H1 (cell line): ENCODE measurements at regions of chr19 and their contacts with region 1.

Region 1: DNA sequence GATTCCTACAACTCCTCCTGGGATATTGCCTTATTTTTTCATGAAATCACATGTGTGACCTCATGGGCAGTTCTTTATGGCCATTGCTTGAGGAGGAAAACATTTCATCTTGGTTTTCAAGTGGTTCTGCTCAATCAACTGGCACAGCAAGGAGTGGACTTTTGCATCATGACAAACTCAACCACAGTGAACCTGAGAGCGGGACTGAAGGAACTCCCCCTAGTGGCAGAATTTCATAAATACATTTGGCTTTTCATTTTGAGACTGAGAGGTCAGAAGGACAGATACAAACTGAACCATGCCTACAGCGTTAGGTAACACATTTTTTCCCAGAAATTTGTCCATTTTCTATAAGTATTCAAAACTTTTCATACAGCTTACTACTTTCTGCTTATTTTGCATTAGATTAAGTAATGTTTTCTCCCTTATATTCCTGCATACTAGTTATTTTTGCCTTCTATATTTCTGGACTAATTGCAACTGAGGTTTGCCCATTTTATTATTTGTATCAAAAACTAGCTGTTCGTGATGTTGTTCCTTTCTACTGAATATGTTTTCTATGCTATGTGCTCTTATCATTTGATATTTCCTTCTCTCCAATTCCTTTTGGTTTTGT is 13.4 kb upstream of the SIGLEC12 start:
- DNase-seq: no peak
- H3K4me3 ChIP-seq: no peak overlapping the region
- H3K27ac ChIP-seq: no peak overlapping the region
- H3K4me1 ChIP-seq: no peaks in the 10 kb centered on the region
- H3K27me3 ChIP-seq: peaks cover 0 to 1% (median 0%) of the 10 kb centered on the region in 4 experiments; a peak in 1 of 7 replicates
- CTCF ChIP-seq: peak; percentile 21 to 74 (median 53); a peak in 3 of 4 replicates
- EP300 ChIP-seq: no peak
- POLR2A ChIP-seq: no peak
- RAD21 ChIP-seq: peak; percentile 41 to 44

Region 2: DNA sequence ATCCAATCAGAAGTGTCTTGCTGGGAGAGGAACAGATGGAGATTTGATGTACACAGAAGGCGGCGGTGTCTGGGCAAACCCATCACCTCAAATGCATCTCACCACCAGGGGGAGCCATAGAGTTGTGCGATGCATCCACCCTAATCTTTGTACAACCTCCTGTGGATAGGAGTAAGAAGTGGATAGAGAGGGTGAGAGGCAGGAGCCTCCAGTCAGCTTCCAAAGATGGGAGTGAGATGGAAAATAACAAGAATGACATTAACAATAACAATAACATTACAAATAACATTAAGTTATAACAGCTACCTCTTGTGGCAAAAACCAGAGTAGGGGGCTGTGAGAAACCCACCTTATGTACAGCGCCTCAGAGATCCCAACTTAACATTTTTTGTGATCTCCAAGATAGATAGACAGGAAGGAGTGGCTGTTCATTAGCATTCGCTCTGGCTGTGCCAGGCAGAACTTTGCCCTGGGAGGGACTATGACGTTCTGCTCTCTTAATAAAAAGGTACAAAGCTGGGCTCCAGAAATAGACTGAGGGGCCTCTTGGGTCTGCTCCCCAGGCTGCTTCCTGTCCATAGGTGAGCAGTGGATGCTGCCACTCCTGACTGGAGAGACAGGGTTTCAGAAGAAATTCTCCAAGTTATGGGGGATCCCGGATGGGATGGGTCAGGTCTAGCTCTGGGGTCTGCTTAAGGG is 41.8 kb before region 1 on chr19:
- CTCF ChIA-PET with region 1: interaction called, 19 read pairs
- POLR2A ChIA-PET with region 1: no interaction called
- DNase-seq: peak; percentile 17 to 86
- H3K4me3 ChIP-seq: no peak overlapping the region
- H3K27ac ChIP-seq: no peak overlapping the region
- H3K4me1 ChIP-seq: no peaks in the 10 kb centered on the region
- H3K27me3 ChIP-seq: no peaks in the 10 kb centered on the region; a peak in 1 of 7 replicates
- CTCF ChIP-seq: peak; percentile 76 to 81 (median 78)
- EP300 ChIP-seq: no peak
- POLR2A ChIP-seq: no peak
- RAD21 ChIP-seq: peak; percentile 78

Region 3: DNA sequence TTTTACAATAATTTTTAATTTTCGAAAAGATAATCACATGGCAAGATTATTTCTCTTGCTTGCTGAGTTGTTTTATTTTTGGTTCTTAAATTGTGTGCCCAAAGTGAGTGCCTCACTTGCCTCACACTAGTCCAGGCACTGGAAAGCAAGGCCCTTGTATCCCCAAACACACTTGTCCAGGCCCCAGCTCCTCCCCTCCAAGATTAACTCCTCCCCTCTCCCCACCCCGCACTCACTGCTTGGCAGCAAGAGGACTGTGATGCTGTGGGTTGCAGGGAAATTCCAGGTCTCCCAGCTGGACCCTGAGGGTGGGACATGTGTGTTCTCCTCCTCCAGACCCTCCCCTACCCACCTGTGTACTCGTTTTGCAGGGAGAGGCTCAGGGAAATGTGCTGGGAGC is 17.3 kb before region 1 on chr19:
- CTCF ChIA-PET with region 1: interaction called, 12 read pairs
- POLR2A ChIA-PET with region 1: no interaction called
- DNase-seq: no peak
- H3K4me3 ChIP-seq: no peak overlapping the region
- H3K27ac ChIP-seq: no peak overlapping the region
- H3K4me1 ChIP-seq: no peaks in the 10 kb centered on the region
- H3K27me3 ChIP-seq: no peaks in the 10 kb centered on the region; a peak in 1 of 7 replicates
- CTCF ChIP-seq: no peak
- EP300 ChIP-seq: no peak
- POLR2A ChIP-seq: no peak
- RAD21 ChIP-seq: no peak

Region 4: DNA sequence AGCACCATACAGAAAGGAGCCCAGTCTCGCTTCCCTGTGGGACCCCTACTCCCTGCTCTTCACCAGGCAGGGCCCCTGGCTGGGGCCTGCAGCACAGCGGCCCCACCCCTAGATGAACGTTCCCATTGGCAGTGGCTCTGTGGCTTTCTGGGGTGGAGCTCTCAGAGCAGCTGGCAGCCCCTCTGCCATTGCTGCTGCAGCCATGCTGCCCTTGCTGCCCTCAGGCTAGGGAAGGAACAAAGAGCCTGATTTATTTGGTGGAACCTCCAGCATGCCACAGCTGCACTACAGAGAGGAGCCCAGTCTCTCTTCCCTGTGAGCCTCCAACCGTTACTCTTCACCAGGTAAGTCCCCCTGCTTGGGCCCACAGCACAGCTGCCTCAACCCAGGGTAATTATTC is 10.7 kb after region 1 on chr19:
- CTCF ChIA-PET with region 1: interaction called, 16 read pairs
- POLR2A ChIA-PET with region 1: no interaction called
- DNase-seq: no peak
- H3K4me3 ChIP-seq: no peak overlapping the region
- H3K27ac ChIP-seq: no peak overlapping the region
- H3K4me1 ChIP-seq: no peaks in the 10 kb centered on the region
- H3K27me3 ChIP-seq: no peaks in the 10 kb centered on the region
- CTCF ChIP-seq: no peak
- EP300 ChIP-seq: no peak
- POLR2A ChIP-seq: no peak
- RAD21 ChIP-seq: no peak

Region 5: DNA sequence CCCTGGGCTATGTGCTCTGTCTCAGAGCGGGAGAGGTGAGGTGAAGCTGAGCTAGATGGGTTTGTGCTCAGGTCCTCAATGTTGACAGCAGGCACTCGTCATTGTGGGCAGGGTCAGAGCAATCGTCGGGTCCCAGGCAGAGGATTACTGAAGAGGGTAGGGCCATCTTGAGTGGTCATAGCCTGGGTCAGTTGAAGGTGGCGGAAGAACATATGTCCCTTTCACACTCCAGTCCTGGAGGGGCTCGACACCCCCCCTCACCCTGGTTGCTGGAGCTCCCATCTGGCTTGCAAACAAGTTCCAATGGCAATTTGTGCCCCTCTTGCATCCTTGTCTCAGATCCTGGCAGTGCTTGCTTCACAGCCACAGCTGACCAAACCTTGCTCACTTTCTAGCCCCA is 23.0 kb after region 1 on chr19:
- CTCF ChIA-PET with region 1: no interaction called
- POLR2A ChIA-PET with region 1: no interaction called
- DNase-seq: no peak
- H3K4me3 ChIP-seq: no peak overlapping the region
- H3K27ac ChIP-seq: no peak overlapping the region
- H3K4me1 ChIP-seq: no peaks in the 10 kb centered on the region
- H3K27me3 ChIP-seq: no peaks in the 10 kb centered on the region
- CTCF ChIP-seq: no peak
- EP300 ChIP-seq: no peak
- POLR2A ChIP-seq: no peak
- RAD21 ChIP-seq: no peak